HepG2 (cell line): ENCODE measurements at regions of chr1 and their contacts with region 1.

Region 1: GRCh38 chr1:32521165-32521564 is 18.1 kb upstream of the ZBTB8A start:
- DNase-seq: no peak
- ATAC-seq: peak; percentile 70
- H3K4me3 ChIP-seq: peak overlapping the region in 1 of 3 experiments; percentile 64; a peak in 2 of 6 replicates
- H3K27ac ChIP-seq: no peak overlapping the region
- H3K4me1 ChIP-seq: peaks cover 18% of the 10 kb centered on the region; the same call in 1 of the 2 replicates
- H3K27me3 ChIP-seq: no peaks in the 10 kb centered on the region
- CTCF ChIP-seq: 0 out of 2 replicates have a peak, but pooled peaks have one; percentile 37
- EP300 ChIP-seq: no peak
- POLR2A ChIP-seq: no peak
- RAD21 ChIP-seq: no peak

Region 2: DNA sequence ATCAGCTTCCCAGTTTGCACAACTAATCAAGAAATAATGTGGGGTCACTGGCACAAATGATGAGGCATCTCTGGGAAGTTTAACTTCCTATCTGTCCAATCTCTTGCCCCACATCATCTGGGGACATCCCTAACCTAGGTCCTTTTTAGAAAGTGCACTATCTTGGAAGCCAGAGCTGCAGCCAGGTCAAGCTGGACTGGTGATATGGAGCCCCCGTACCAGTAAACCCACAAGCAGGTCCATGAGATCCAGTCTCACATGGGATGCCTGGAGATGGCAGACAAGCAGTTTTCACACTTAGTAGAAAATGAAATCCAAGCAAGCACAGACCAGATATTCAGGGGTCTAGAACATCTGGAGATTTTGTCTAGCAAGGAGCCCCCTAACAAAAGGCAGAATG is 99.4 kb before region 1 on chr1:
- CTCF ChIA-PET with region 1: no interaction called
- POLR2A ChIA-PET with region 1: no interaction called
- in situ Hi-C with region 1: no loop called
- intact Hi-C with region 1: no loop called
- DNase-seq: no peak
- ATAC-seq: no peak
- H3K4me3 ChIP-seq: no peak overlapping the region
- H3K27ac ChIP-seq: no peak overlapping the region
- H3K4me1 ChIP-seq: no peaks in the 10 kb centered on the region
- H3K27me3 ChIP-seq: peaks cover 4 to 30% of the 10 kb centered on the region in 2 experiments
- CTCF ChIP-seq: no peak
- EP300 ChIP-seq: no peak
- POLR2A ChIP-seq: no peak
- RAD21 ChIP-seq: no peak

Region 3: GRCh38 chr1:32540605-32541004 is 19.4 kb after region 1 on chr1:
- CTCF ChIA-PET with region 1: no interaction called
- POLR2A ChIA-PET with region 1: no interaction called
- in situ Hi-C with region 1: no loop called
- intact Hi-C with region 1: no loop called
- DNase-seq: no peak
- ATAC-seq: no peak
- H3K4me3 ChIP-seq: no peak overlapping the region; a peak in 3 of 6 replicates
- H3K27ac ChIP-seq: no peak overlapping the region
- H3K4me1 ChIP-seq: peaks cover 22% of the 10 kb centered on the region
- H3K27me3 ChIP-seq: peaks cover 2 to 17% of the 10 kb centered on the region in 2 experiments; a peak in 2 of 5 replicates
- CTCF ChIP-seq: no peak
- EP300 ChIP-seq: no peak
- POLR2A ChIP-seq: no peak
- RAD21 ChIP-seq: no peak

Region 4: DNA sequence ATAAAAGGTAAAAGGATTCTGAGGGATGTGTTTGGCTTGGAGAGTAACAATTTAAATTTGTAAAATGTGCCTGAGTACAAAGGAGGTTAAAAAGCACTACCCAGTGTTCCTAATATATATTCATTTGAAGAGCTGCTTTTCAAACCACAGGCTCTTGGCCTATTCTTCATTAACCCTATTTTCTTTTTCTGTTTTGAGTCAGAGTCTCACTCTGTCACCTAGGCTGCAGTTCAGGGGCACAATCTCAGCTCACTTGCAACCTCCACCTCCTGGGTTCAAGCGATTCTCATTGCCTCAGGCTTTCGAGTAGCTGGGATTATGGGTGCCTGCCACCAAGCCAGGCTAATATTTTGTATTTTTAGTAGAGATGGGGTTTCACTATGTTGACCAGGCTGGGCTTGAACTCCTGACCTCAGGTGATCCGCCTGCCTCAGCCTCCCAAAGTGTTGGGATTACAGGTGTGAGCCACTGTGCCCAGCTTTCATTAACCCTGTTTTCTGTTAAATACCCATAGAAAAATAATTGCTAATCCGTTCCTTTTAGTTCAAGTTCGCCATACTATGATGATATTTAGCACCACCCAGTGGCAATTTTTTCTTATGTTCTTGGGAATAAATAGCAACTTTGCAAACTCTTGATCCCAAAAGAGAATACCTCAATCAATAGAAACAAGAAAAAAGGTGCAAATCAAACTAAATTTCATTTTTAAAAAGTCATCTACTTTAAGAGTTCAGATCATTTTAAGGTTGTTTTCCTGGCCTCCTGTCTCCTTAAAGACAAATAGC is 98.7 kb after region 1 on chr1:
- CTCF ChIA-PET with region 1: no interaction called
- POLR2A ChIA-PET with region 1: no interaction called
- in situ Hi-C with region 1: no loop called
- intact Hi-C with region 1: loop called (anchors 5 kb)
- DNase-seq: peak; percentile 11
- ATAC-seq: no peak
- H3K4me3 ChIP-seq: no peak overlapping the region
- H3K27ac ChIP-seq: no peak overlapping the region
- H3K4me1 ChIP-seq: no peaks in the 10 kb centered on the region
- H3K27me3 ChIP-seq: no peaks in the 10 kb centered on the region
- CTCF ChIP-seq: peak; percentile 20; the same call in 1 of the 2 replicates
- EP300 ChIP-seq: no peak
- POLR2A ChIP-seq: no peak
- RAD21 ChIP-seq: no peak

Region 5: GRCh38 chr1:32870615-32871363 is 349.6 kb after region 1 on chr1 and contains the start of gene FNDC5:
- CTCF ChIA-PET with region 1: no interaction called
- POLR2A ChIA-PET with region 1: no interaction called
- in situ Hi-C with region 1: no loop called
- intact Hi-C with region 1: loop called (anchors 5 kb)
- DNase-seq: no peak
- ATAC-seq: peak; percentile 67
- H3K4me3 ChIP-seq: peak within 1 kb of the TSS; percentile 58 to 78 (median 59)
- H3K27ac ChIP-seq: no peak within 1 kb of the TSS
- H3K4me1 ChIP-seq: peaks cover 26% of the 10 kb centered on the region
- H3K27me3 ChIP-seq: peaks cover 0 to 19% of the 10 kb centered on the region in 2 experiments; a peak in 3 of 5 replicates
- CTCF ChIP-seq: no peak
- EP300 ChIP-seq: no peak
- POLR2A ChIP-seq: no peak
- RAD21 ChIP-seq: no peak
- total RNA-seq, gene FNDC5: 1.6 and 3.1 TPM in 2 replicates